Psoas muscle (tissue), 8 donors: ENCODE measurements at regions of chr2 and their contacts with region 1.

Region 1: GRCh38 chr2:64330281-64331113 is 123.5 kb upstream of the LGALSL start:
- DNase-seq: peak; percentile 71 to 85
- ATAC-seq: peak; percentile 62 to 85 (median 71)
- H3K4me3 ChIP-seq: peak overlapping the region; percentile 38
- H3K27ac ChIP-seq: peak overlapping the region; percentile 51
- H3K4me1 ChIP-seq: peaks cover 42% of the 10 kb centered on the region
- H3K27me3 ChIP-seq: no peaks in the 10 kb centered on the region
- CTCF ChIP-seq: peak; percentile 95

Region 2: GRCh38 chr2:64052468-64053241 is 277.8 kb before region 1 on chr2:
- intact Hi-C with region 1: loop called (anchors 1 to 5 kb)
- DNase-seq: no peak
- ATAC-seq: no peak
- H3K4me3 ChIP-seq: no peak overlapping the region
- H3K27ac ChIP-seq: peak overlapping the region; percentile 46
- H3K4me1 ChIP-seq: no peaks in the 10 kb centered on the region
- H3K27me3 ChIP-seq: no peaks in the 10 kb centered on the region
- CTCF ChIP-seq: no peak

Region 3: DNA sequence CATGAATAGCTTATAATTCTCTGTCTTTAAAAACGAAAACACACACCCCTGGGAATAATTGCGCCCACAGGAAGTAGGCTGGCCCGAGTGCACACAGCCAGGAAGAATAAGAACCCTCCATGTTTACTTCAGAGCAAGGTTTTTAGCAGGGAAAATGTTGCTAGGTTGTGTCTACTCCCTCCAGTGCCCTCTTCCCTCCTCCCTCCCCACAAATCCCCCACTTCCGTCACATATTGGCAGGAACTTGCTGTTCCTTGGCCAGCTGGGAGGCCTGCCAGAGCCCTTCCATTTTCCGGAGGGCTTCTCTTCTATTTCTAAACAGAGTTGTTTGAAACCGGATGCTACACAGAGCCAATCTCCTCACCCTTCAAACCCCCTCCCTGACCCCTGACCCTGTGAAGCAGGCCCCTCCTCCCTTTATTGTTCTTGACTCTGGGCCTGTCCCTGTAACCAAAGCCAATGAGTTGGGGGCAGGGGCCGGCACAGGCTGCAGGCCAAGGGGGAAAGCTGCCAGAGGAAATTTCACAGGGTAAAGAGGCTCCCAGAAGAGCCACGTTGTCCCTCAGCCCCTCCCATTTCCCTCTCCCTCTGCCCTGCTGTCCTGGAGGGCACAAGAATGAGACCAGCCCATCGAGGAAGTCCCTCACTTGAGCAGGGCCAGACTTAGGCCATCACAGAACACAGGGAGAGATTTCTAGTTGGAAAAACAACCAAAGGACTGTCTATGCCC is 73.7 kb after region 1 on chr2:
- intact Hi-C with region 1: loop called in 1 of 2 experiments (anchors 5 kb)
- DNase-seq: peak; percentile 86 to 92
- ATAC-seq: peak; percentile 67 to 84 (median 71)
- H3K4me3 ChIP-seq: peak overlapping the region; percentile 39
- H3K27ac ChIP-seq: peak overlapping the region; percentile 85
- H3K4me1 ChIP-seq: peaks cover 57% of the 10 kb centered on the region
- H3K27me3 ChIP-seq: no peaks in the 10 kb centered on the region
- CTCF ChIP-seq: no peak

Region 4: GRCh38 chr2:64562148-64562784 is 231.8 kb after region 1 on chr2:
- intact Hi-C with region 1: loop called (anchors 2 to 5 kb)
- DNase-seq: no peak
- ATAC-seq: peak in 2 of 4 donors; percentile 42 to 79
- H3K4me3 ChIP-seq: no peak overlapping the region
- H3K27ac ChIP-seq: no peak overlapping the region
- H3K4me1 ChIP-seq: peaks cover 23% of the 10 kb centered on the region
- H3K27me3 ChIP-seq: no peaks in the 10 kb centered on the region
- CTCF ChIP-seq: peak; percentile 42